B cell (primary cell): ENCODE measurements at regions of chr10 and their contacts with region 1.

Region 1: GRCh38 chr10:95864906-95865813 is 42.6 kb upstream of the CC2D2B start:
- DNase-seq: peak; percentile 83
- ATAC-seq: peak; percentile 99
- H3K4me3 ChIP-seq: no peak overlapping the region
- H3K4me3 Mint-ChIP-seq: no peak overlapping the region
- H3K27ac ChIP-seq: peak overlapping the region; percentile 26 to 75
- H3K27ac Mint-ChIP-seq: peak overlapping the region; percentile 88
- H3K4me1 ChIP-seq: peaks cover 11 to 13% of the 10 kb centered on the region in 2 donors
- H3K4me1 Mint-ChIP-seq: peaks cover 23% of the 10 kb centered on the region
- H3K27me3 ChIP-seq: no peaks in the 10 kb centered on the region
- H3K27me3 Mint-ChIP-seq: no peaks in the 10 kb centered on the region
- CTCF ChIP-seq: peak; percentile 88

Region 2: GRCh38 chr10:95430231-95430951 is 434.8 kb before region 1 on chr10:
- CTCF ChIA-PET with region 1: interaction called, 27 read pairs
- POLR2A ChIA-PET with region 1: no interaction called
- intact Hi-C with region 1: no loop called
- DNase-seq: peak; percentile 75
- ATAC-seq: peak; percentile 87
- H3K4me3 ChIP-seq: no peak overlapping the region
- H3K4me3 Mint-ChIP-seq: no peak overlapping the region
- H3K27ac ChIP-seq: no peak overlapping the region
- H3K27ac Mint-ChIP-seq: no peak overlapping the region
- H3K4me1 ChIP-seq: peaks cover 0 to 5% of the 10 kb centered on the region in 2 donors
- H3K4me1 Mint-ChIP-seq: no peaks in the 10 kb centered on the region
- H3K27me3 ChIP-seq: peaks cover 0 to 2% (median 0%) of the 10 kb centered on the region in 4 experiments
- H3K27me3 Mint-ChIP-seq: peaks cover 15% of the 10 kb centered on the region
- CTCF ChIP-seq: peak; percentile 90

Region 3: DNA sequence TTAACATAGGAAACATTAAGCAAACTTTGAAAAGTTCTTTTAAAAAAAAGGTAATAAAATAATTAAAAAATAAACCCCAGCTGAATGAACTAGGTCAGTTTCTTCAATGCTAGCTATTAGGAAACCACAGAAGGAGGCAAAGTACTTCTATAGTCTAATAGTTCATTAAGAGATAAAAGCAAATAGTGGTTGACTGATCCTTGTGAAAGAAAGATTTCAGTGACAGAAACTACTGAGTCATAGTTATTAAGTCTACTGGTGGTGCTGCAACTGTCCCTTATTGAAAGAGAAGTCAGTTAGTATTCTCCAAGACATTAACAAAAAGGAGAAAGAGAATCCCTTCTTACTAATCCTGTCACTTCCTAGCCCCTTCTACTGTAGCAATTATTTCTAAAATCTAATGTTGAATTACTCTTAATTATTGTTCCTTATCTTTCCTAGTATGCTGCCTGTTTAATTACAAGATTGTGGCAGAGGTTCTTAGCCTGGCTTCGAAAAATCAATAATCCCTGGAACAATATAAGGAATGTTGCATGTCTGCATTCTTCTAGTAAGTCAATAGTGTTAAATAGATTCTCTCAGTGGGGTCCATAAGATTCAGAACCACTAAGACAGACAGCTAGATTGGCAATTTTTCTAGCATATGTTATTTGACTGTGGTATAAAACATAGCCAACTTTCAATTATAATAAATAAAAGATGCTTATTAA is 189.6 kb before region 1 on chr10:
- CTCF ChIA-PET with region 1: interaction called, 10 read pairs
- POLR2A ChIA-PET with region 1: no interaction called
- intact Hi-C with region 1: no loop called
- DNase-seq: no peak
- ATAC-seq: no peak
- H3K4me3 ChIP-seq: no peak overlapping the region
- H3K4me3 Mint-ChIP-seq: no peak overlapping the region
- H3K27ac ChIP-seq: no peak overlapping the region
- H3K27ac Mint-ChIP-seq: no peak overlapping the region
- H3K4me1 ChIP-seq: no peaks in the 10 kb centered on the region
- H3K4me1 Mint-ChIP-seq: no peaks in the 10 kb centered on the region
- H3K27me3 ChIP-seq: no peaks in the 10 kb centered on the region
- H3K27me3 Mint-ChIP-seq: no peaks in the 10 kb centered on the region
- CTCF ChIP-seq: no peak

Region 4: GRCh38 chr10:95688648-95689047 is 176.5 kb before region 1 on chr10:
- CTCF ChIA-PET with region 1: interaction called, 221 read pairs
- POLR2A ChIA-PET with region 1: interaction called, 31 read pairs
- intact Hi-C with region 1: loop called (anchors 1 kb)
- DNase-seq: no peak
- ATAC-seq: no peak
- H3K4me3 ChIP-seq: no peak overlapping the region
- H3K4me3 Mint-ChIP-seq: no peak overlapping the region
- H3K27ac ChIP-seq: no peak overlapping the region
- H3K27ac Mint-ChIP-seq: no peak overlapping the region
- H3K4me1 ChIP-seq: peaks cover 11 to 14% of the 10 kb centered on the region in 2 donors
- H3K4me1 Mint-ChIP-seq: peaks cover 34% of the 10 kb centered on the region
- H3K27me3 ChIP-seq: no peaks in the 10 kb centered on the region
- H3K27me3 Mint-ChIP-seq: no peaks in the 10 kb centered on the region
- CTCF ChIP-seq: peak; percentile 41

Region 5: DNA sequence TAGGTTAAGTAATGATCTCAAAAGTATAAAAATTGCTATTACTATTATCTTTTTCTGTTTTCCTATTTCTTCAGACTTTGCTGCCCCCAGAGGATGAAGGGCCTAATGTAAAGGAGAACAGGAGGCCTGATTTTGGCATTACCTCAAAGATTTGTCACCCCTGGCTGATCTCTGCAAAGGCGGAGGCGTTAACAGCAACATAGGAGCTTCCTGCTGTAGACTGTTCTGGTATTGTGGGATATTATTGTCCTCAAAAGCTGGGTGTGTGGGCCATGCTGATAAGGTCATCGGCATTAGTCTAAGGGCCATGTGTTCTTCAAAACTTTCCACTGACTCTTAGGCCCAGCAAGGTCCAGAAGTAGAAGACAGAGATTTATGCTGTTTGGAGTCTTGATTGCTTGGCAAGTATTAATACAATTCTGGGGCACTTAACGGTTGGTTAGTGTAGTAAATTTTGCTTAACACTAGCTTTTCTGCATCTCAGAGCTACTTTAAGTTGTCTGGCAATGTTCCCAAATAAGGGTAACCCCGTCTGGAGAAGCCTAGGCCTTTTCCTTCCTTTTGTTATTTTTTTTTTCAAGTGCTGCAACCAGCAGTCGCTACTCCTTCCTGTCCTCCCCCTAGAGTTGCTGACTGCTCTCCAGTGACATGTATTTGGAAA is 123.2 kb before region 1 on chr10:
- CTCF ChIA-PET with region 1: interaction called, 21 read pairs
- POLR2A ChIA-PET with region 1: no interaction called
- intact Hi-C with region 1: no loop called
- DNase-seq: peak; percentile 79
- ATAC-seq: peak; percentile 84
- H3K4me3 ChIP-seq: peak overlapping the region; percentile 7 to 63 (median 49)
- H3K4me3 Mint-ChIP-seq: peak overlapping the region; percentile 90
- H3K27ac ChIP-seq: peak overlapping the region; percentile 76 to 78
- H3K27ac Mint-ChIP-seq: peak overlapping the region; percentile 98
- H3K4me1 ChIP-seq: peaks cover 44 to 48% of the 10 kb centered on the region in 2 donors
- H3K4me1 Mint-ChIP-seq: peaks cover 55% of the 10 kb centered on the region
- H3K27me3 ChIP-seq: no peaks in the 10 kb centered on the region
- H3K27me3 Mint-ChIP-seq: no peaks in the 10 kb centered on the region
- CTCF ChIP-seq: peak; percentile 66

Region 6: DNA sequence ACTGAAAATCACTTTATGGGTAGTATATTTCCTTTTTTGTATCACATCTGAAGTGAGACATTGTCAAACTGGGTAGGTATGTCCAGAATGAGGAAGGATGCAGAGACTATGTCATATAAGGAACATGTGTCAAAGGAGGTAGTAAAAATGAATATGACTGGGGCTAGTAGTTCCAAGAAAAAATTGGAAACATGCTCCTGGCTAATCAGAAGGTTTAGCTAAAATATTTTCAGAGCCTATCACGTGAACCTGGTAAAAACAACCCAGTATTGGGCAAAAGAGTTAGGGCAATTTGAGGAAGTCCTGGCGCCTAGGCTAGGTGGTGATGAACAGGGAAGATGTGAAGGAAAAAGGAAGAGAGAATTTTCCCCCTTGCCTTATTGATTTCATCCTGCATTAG is 82.8 kb before region 1 on chr10:
- CTCF ChIA-PET with region 1: no interaction called
- POLR2A ChIA-PET with region 1: no interaction called
- intact Hi-C with region 1: no loop called
- DNase-seq: peak; percentile 69
- ATAC-seq: peak; percentile 39
- H3K4me3 ChIP-seq: no peak overlapping the region
- H3K4me3 Mint-ChIP-seq: peak overlapping the region; percentile 62
- H3K27ac ChIP-seq: peak overlapping the region; percentile 92 to 96
- H3K27ac Mint-ChIP-seq: peak overlapping the region; percentile 92
- H3K4me1 ChIP-seq: peaks cover 66 to 69% of the 10 kb centered on the region in 2 donors
- H3K4me1 Mint-ChIP-seq: peaks cover 87% of the 10 kb centered on the region
- H3K27me3 ChIP-seq: no peaks in the 10 kb centered on the region
- H3K27me3 Mint-ChIP-seq: no peaks in the 10 kb centered on the region
- CTCF ChIP-seq: no peak

Region 7: DNA sequence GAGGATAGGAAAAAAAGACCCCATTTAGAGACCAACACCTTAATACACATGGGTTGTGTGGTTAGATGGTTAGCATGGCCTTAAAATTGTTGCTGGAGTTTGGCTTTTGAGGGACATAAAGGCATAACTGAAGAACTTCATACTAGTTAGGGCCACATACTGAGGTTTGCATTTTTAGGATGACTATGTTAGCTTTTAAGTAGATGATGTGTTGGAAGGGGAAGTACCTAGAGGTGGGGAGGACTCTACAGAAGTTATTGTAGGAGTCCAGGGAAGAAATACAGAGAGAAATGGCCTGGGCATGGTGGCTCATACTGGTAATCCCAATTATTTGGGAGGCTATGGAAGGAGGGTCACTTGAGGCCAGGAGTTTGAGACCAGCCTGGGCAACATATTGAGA is 68.7 kb before region 1 on chr10:
- CTCF ChIA-PET with region 1: no interaction called
- POLR2A ChIA-PET with region 1: no interaction called
- intact Hi-C with region 1: no loop called
- DNase-seq: no peak
- ATAC-seq: peak; percentile 38
- H3K4me3 ChIP-seq: no peak overlapping the region
- H3K4me3 Mint-ChIP-seq: peak overlapping the region; percentile 48
- H3K27ac ChIP-seq: peak overlapping the region in 1 of 2 donors; percentile 83
- H3K27ac Mint-ChIP-seq: peak overlapping the region; percentile 85
- H3K4me1 ChIP-seq: peaks cover 64% of the 10 kb centered on the region in 2 donors
- H3K4me1 Mint-ChIP-seq: peaks cover 92% of the 10 kb centered on the region
- H3K27me3 ChIP-seq: no peaks in the 10 kb centered on the region
- H3K27me3 Mint-ChIP-seq: no peaks in the 10 kb centered on the region
- CTCF ChIP-seq: no peak

Region 8: GRCh38 chr10:95832216-95833041 is 32.7 kb before region 1 on chr10:
- CTCF ChIA-PET with region 1: interaction called, 123 read pairs
- POLR2A ChIA-PET with region 1: interaction called, 3 read pairs
- intact Hi-C with region 1: no loop called
- DNase-seq: peak; percentile 94
- ATAC-seq: peak; percentile 89
- H3K4me3 ChIP-seq: peak overlapping the region in 3 of 5 experiments; percentile 11 to 36 (median 23)
- H3K4me3 Mint-ChIP-seq: peak overlapping the region; percentile 83
- H3K27ac ChIP-seq: peak overlapping the region; percentile 89 to 95
- H3K27ac Mint-ChIP-seq: peak overlapping the region; percentile 96
- H3K4me1 ChIP-seq: peaks cover 82 to 87% of the 10 kb centered on the region in 2 donors
- H3K4me1 Mint-ChIP-seq: peaks cover 82% of the 10 kb centered on the region
- H3K27me3 ChIP-seq: no peaks in the 10 kb centered on the region
- H3K27me3 Mint-ChIP-seq: no peaks in the 10 kb centered on the region
- CTCF ChIP-seq: no peak